ENCODE measurements at regions of chr4 and their contacts with region 1.

Region 1: GRCh38 chr4:15479089-15479912 is 9.6 kb downstream of the CC2D2A start:
- DNase-seq: peak; percentile 50
- H3K4me3 Mint-ChIP-seq: peak overlapping the region; percentile 94
- H3K27ac Mint-ChIP-seq: peak overlapping the region; percentile 98
- H3K4me1 Mint-ChIP-seq: no peaks in the 10 kb centered on the region
- H3K27me3 Mint-ChIP-seq: no peaks in the 10 kb centered on the region
- CTCF ChIP-seq: peak; percentile 47

Region 2: DNA sequence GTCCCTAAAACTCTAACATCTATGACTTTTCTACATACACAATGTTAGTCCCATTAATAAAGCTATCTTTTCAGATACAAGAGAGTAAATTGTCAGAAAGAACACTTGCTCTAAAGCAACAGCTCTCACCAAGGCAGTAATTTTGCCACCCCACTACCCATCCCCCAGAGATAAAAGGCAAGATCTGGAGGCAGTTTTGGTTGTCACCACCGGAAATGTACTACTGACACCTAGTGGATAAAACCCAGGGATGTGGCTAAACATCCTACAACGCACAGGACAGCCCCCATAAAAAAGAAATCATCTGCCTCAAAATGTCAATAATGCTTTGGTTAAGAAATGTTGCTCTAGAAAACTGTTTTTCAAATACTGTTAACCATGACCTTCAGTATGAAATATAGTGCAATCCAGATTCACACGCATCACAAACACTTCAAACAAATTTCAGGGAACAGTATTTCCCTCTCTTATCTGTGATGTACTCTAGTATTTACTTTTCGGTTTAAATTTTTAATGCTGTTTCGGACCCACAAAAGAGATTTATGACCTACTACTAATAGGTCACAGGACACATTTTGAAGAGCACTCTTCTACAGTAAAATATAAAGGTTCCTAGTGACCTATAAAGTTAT is 170.7 kb after region 1 on chr4:
- CTCF ChIA-PET with region 1: no interaction called
- intact Hi-C with region 1: loop called (anchors 1 kb)
- DNase-seq: peak; percentile 52
- H3K4me3 Mint-ChIP-seq: no peak overlapping the region
- H3K27ac Mint-ChIP-seq: peak overlapping the region; percentile 42
- H3K4me1 Mint-ChIP-seq: peaks cover 26% of the 10 kb centered on the region
- H3K27me3 Mint-ChIP-seq: no peaks in the 10 kb centered on the region
- CTCF ChIP-seq: peak; percentile 51

Region 3: DNA sequence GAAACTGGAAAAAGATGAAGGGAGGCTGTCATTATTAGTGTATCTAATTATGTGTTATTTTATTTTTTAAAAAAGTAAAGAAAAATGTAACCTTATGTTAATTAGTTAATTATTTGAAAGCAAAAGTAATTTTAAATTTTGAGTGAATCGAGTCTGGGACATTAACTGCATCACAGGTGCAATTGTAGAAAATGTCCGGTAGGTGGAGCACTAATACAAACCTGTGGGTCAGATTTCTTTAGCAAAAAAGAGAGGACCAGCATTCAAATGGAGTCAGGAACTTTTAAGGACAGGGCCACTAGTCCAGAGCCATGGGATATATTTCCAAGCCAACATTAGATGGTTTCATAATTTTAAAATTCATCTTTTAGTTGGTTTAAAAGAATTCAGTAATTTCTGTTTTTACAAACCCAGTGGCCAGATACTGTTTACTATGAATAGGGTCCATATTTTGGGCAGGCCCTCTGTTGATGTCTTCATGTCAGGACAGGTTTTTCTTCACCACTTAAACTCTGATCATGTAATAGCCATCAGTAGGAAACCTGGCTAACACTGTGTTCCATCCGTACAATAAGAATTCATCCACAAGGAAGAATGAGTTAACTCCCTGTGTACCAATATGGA is 250.7 kb after region 1 on chr4:
- CTCF ChIA-PET with region 1: no interaction called
- intact Hi-C with region 1: loop called (anchors 1 kb)
- DNase-seq: no peak
- H3K4me3 Mint-ChIP-seq: no peak overlapping the region
- H3K27ac Mint-ChIP-seq: no peak overlapping the region
- H3K4me1 Mint-ChIP-seq: no peaks in the 10 kb centered on the region
- H3K27me3 Mint-ChIP-seq: no peaks in the 10 kb centered on the region
- CTCF ChIP-seq: peak; percentile 50

Region 4: DNA sequence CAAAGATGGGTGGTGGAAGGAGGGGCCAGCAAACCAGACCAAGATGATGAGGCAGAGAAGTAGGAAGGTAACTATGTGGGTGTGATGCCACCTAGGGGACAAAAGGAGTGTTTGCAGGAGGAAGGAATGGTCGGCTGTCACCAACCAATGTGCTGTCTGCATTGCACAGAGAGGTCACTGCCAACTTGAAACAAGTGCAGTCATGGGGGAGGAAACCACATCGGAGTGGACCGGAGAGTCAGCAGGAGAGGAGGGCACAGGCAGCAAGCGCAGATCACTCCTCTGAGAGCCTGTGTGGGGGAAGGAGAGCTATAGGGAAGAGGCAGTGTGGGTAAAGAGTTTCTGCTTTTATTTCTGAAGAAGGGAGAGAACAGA is 522.2 kb after region 1 on chr4:
- CTCF ChIA-PET with region 1: no interaction called
- intact Hi-C with region 1: loop called (anchors 1 kb)
- DNase-seq: peak; percentile 33
- H3K4me3 Mint-ChIP-seq: no peak overlapping the region
- H3K27ac Mint-ChIP-seq: no peak overlapping the region
- H3K4me1 Mint-ChIP-seq: no peaks in the 10 kb centered on the region
- H3K27me3 Mint-ChIP-seq: no peaks in the 10 kb centered on the region
- CTCF ChIP-seq: peak; percentile 39

Measured in Calu3 (cell line).